Activated naive CD4-positive, alpha-beta T cell treated with anti-CD3 and anti-CD28 coated beads for 36 hours (primary cell): ENCODE measurements at regions of chr11 and their contacts with region 1.

Region 1: GRCh38 chr11:95715777-95716241 is 73.8 kb downstream of the FAM76B start:
- DNase-seq: peak; percentile 64
- H3K4me3 Mint-ChIP-seq: no peak overlapping the region
- H3K27ac Mint-ChIP-seq: no peak overlapping the region
- H3K4me1 Mint-ChIP-seq: peaks cover 54% of the 10 kb centered on the region
- H3K27me3 Mint-ChIP-seq: no peaks in the 10 kb centered on the region

Region 2: GRCh38 chr11:95764267-95764898 is 48.6 kb after region 1 on chr11:
- CTCF ChIA-PET with region 1: interaction called, 4 read pairs
- intact Hi-C with region 1: loop called (anchors 1 kb)
- DNase-seq: no peak
- H3K4me3 Mint-ChIP-seq: no peak overlapping the region
- H3K27ac Mint-ChIP-seq: no peak overlapping the region
- H3K4me1 Mint-ChIP-seq: no peaks in the 10 kb centered on the region
- H3K27me3 Mint-ChIP-seq: peaks cover 1% of the 10 kb centered on the region